Right ventricle myocardium inferior (tissue), 1 donor: ENCODE measurements at regions of chr1 and their contacts with region 1.

Region 1: DNA sequence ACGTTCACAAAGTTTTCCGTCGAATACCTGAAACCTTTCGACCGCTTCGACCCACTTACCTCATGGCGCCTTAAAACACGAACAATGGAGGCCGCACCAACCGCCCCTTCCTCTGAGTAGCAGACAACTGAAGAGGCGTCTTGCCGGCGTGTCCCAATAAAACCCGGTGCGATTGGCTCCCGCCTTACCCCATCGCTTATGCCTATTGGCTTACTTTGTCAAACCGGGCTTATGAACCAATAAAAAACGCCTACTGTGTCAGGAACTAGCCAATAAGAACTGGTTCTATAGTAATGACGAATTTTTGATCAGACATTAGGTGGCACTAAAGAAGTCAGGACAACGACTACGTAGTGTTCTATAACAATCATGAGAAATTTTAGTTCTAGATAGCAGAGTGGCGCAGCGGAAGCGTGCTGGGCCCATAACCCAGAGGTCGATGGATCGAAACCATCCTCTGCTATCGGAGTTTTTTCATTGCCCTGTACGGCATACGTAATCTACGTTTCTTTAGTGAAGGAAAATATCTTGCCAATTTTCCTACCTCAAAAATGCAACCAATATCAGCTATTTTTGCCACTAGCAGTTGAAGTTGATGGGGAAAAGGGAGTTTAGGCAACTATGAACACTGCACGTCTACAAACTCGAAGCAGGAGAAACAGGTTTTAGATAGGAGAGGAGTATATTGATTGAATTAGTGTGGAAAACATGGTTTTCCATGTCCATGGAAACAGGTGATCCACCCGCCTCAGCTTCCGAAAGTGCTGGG is at the start of gene ILF2:
- DNase-seq: peak; percentile 97
- ATAC-seq: peak; percentile 97
- total RNA-seq, gene ILF2: 60.4 TPM

Region 2: GRCh38 chr1:153352523-153352922 is 318.5 kb before region 1 on chr1:
- intact Hi-C with region 1: loop called (anchors 10 kb)
- DNase-seq: peak; percentile 81
- ATAC-seq: peak; percentile 84

Region 3: GRCh38 chr1:153506831-153507413 is 164.1 kb before region 1 on chr1:
- intact Hi-C with region 1: no loop called
- DNase-seq: peak; percentile 89
- ATAC-seq: peak; percentile 90

Region 4: GRCh38 chr1:153633716-153634665 is 37.1 kb before region 1 on chr1 and contains the start of gene CHTOP:
- intact Hi-C with region 1: loop called (anchors 2 kb)
- DNase-seq: peak; percentile 98
- ATAC-seq: peak; percentile 96
- total RNA-seq, gene CHTOP: 72.1 TPM